CD14-positive monocyte (primary cell): ENCODE measurements at regions of chr7 and their contacts with region 1.

Region 1: GRCh38 chr7:151085691-151086620 is at the start of gene AGAP3:
- DNase-seq: peak; percentile 59 to 86 (median 83)
- H3K4me3 ChIP-seq: peak within 1 kb of the TSS; percentile 73 to 98 (median 95)
- H3K4me3 Mint-ChIP-seq: peak within 1 kb of the TSS; percentile 90 to 94
- H3K27ac ChIP-seq: peak within 1 kb of the TSS; percentile 97 to 99
- H3K27ac Mint-ChIP-seq: peak within 1 kb of the TSS; percentile 79 to 94 (median 89)
- H3K4me1 ChIP-seq: peaks cover 64 to 85% of the 10 kb centered on the region in 2 donors
- H3K4me1 Mint-ChIP-seq: peaks cover 59% of the 10 kb centered on the region
- H3K27me3 ChIP-seq: no peaks in the 10 kb centered on the region
- H3K27me3 Mint-ChIP-seq: peaks cover 0 to 2% (median 0%) of the 10 kb centered on the region in 3 donors
- CTCF ChIP-seq: no peak
- polyA plus RNA-seq, gene AGAP3: 6.4 to 133 (median 6.8) TPM

Region 2: DNA sequence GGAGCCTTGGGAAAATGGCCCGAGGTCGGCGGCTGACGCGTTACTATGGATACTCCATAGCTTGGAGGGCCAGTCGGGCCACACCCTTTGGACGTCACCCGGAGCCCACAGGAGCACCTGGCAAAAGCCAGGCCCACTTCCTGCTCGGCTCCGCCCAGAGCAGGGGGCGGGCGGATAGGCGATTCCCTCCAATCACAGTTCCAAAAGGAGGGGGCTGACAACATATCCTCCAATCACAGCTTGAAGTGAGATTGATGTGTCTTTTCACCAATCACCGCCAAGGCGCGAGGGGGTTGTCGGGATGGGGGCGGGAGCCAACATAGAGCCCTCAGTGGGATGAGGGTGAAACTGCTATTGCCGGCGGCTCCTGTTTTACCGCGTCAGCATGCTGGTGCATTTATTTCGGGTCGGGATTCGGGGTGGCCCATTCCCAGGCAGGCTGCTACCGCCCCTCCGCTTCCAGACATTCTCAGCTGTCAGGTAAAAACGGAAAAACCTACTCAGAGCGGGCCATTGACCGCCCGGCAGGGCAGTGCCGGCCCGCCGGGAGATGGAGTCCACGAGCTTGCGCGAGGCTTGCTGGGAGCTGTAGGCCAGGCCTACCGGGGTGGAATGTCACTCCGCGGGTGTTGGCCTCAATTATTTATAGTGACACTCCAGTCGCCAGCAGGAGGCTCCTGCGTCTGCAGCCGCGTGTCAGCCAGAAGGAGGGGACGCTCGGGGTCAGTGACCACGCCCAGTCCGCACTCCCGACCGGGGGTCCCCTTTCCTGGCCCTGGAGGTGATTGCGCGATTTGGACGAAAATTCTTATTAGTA is 57.6 kb before region 1 on chr7 and contains the start of gene ABCB8:
- intact Hi-C with region 1: loop called (anchors 2 to 10 kb)
- DNase-seq: peak; percentile 97 to 98 (median 98)
- H3K4me3 ChIP-seq: peak within 1 kb of the TSS; percentile 53 to 98 (median 96)
- H3K4me3 Mint-ChIP-seq: peak within 1 kb of the TSS; percentile 91 to 94
- H3K27ac ChIP-seq: peak within 1 kb of the TSS; percentile 71 to 81
- H3K27ac Mint-ChIP-seq: peak within 1 kb of the TSS; percentile 91 to 97 (median 95)
- H3K4me1 ChIP-seq: peaks cover 14 to 18% of the 10 kb centered on the region in 2 donors
- H3K4me1 Mint-ChIP-seq: peaks cover 25% of the 10 kb centered on the region
- H3K27me3 ChIP-seq: peaks cover 0 to 4% of the 10 kb centered on the region in 2 donors
- H3K27me3 Mint-ChIP-seq: peaks cover 3 to 22% (median 6%) of the 10 kb centered on the region in 3 donors
- CTCF ChIP-seq: peak; percentile 64
- polyA plus RNA-seq, gene ABCB8: 9.3 to 19.9 (median 9.5) TPM

Region 3: DNA sequence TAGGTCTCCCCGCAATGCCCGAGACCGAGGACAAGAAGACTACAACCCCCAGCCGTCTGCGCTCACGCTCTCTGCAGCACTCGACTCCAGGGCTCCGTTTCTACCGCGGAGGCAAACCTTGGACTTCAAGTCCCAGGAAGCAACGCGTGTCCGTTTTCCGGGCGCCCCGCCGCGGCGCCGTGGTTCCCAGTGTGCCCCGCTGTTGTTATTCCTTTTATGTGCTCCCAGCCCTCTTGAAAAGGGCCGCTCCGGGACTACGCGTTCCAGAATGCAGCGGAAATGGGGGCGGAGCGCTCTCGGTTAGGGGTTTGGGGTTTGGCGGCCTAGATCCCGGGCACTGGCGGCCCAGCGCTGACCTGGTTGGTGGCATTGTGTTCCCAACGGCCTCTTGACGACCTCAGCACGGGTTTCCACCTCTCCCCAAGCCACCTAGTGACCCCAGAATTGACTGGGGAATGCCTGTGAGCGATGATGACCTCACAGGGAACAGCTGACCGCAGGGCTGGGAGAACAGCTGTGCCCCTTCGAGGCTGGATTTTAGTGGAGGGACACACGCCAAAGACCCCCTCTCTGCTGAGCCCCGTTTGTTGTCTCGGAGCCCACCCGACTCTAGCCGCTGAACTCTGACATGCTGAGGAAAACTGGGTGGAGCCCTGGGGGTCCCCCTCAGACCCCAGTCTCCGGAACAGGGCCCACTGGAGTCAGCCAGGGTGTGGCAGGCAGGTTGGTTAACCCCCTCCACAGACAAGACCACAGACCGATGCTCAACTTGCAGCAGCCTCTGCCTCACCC is 27.8 kb before region 1 on chr7:
- intact Hi-C with region 1: loop called (anchors 2 kb)
- DNase-seq: peak; percentile 97 to 99 (median 98)
- H3K4me3 ChIP-seq: peak overlapping the region; percentile 66 to 97 (median 94)
- H3K4me3 Mint-ChIP-seq: peak overlapping the region; percentile 93 to 98
- H3K27ac ChIP-seq: peak overlapping the region; percentile 82 to 89
- H3K27ac Mint-ChIP-seq: peak overlapping the region; percentile 82 to 93 (median 89)
- H3K4me1 ChIP-seq: peaks cover 41 to 50% of the 10 kb centered on the region in 2 donors
- H3K4me1 Mint-ChIP-seq: peaks cover 41% of the 10 kb centered on the region
- H3K27me3 ChIP-seq: no peaks in the 10 kb centered on the region
- H3K27me3 Mint-ChIP-seq: peaks cover 0 to 2% (median 1%) of the 10 kb centered on the region in 3 donors
- CTCF ChIP-seq: no peak